ENCODE measurements at regions of chr11 and their contacts with region 1.

Region 1: GRCh38 chr11:37770145-37770544 is 1172.1 kb upstream of the RAG2 start:
- DNase-seq: no peak
- ATAC-seq: no peak
- H3K4me3 ChIP-seq: no peak overlapping the region
- H3K27ac ChIP-seq: no peak overlapping the region
- H3K4me1 ChIP-seq: no peaks in the 10 kb centered on the region
- H3K27me3 ChIP-seq: no peaks in the 10 kb centered on the region
- CTCF ChIP-seq: no peak
- EP300 ChIP-seq: no peak
- POLR2A ChIP-seq: no peak
- RAD21 ChIP-seq: no peak

Region 2: DNA sequence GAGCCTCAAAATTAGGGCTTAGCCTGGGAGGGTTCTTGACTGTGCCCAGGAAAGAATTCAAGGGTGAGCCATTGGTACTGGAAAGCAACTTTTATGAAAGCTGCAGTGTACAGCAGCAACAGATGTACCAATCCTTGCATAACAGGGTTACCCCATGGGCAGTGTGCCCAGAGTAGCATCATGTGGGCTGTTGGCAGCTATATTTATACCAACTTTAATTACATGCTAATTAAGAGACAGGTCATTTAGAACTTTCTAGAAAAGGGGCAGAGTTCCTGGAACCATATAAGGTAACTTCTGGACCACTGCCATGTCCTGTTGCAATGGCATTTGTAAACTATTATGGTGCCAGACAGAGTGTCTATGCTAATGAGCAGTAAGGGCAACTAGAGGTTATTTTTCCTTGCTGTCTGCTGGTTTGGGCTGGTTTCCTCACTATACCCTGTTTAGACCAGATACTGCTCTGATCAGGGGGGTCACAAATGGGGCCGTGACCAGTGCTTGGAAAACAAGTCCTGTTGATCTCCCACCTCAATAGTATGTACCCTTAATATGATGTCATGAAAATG is 51.6 kb before region 1 on chr11:
- CTCF ChIA-PET with region 1: no interaction called
- POLR2A ChIA-PET with region 1: no interaction called
- RAD21 ChIA-PET with region 1: no interaction called
- SMC1A ChIA-PET with region 1: no interaction called
- in situ Hi-C with region 1: no loop called
- intact Hi-C with region 1: loop called (anchors 5 kb)
- DNase-seq: no peak
- ATAC-seq: no peak
- H3K4me3 ChIP-seq: no peak overlapping the region
- H3K27ac ChIP-seq: no peak overlapping the region
- H3K4me1 ChIP-seq: no peaks in the 10 kb centered on the region
- H3K27me3 ChIP-seq: no peaks in the 10 kb centered on the region
- CTCF ChIP-seq: no peak
- EP300 ChIP-seq: no peak
- POLR2A ChIP-seq: no peak
- RAD21 ChIP-seq: no peak

Measured in GM12878 (cell line).